Left cardiac atrium (tissue), 4 donors: ENCODE measurements at regions of chr18 and their contacts with region 1.

Region 1: GRCh38 chr18:48330403-48331022 is 78.7 kb downstream of the ZBTB7C start:
- DNase-seq: no peak
- ATAC-seq: peak in 1 of 2 donors; percentile 74

Region 2: DNA sequence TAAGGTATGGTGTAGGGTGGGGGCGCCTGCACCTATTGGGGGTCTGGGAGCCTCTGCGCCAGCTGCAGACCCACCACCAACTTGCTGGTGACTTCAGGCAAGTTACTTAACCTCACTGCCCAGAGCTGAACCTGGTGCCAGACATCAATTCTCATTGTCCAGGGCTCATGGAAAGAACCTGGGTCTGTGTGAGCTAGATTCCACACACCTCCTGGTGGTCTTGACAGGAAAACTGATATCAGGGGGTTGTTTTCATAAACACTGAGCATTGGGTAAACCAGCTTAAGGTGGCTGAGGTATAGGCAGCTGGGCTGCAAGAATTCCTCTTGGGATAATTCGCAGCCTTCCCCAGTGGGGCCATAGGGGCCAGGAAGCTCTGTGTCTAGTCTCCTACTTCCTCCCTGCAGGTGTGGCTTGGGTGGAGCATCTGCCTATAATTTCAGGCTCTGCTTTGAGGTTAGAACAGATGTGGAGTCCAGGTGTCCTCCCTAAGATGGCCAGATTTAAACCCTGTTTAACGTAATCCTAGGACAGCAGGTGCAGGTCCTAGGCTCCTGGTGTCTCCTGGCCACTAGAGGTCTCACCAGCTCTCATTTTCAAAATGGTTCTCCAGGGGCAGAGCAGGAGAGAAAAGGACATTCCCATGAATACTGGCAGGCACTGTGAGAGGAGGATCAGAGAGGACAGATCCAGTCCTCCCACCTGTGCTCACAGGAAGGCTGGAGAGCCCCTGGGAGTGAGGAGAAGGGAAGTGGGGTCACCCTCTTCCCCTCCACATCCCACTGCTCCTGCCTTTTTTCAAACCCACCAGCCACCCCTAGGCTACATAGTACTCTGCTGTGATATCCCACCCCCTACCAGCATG is 299.7 kb before region 1 on chr18:
- intact Hi-C with region 1: loop called (anchors 5 to 10 kb)
- DNase-seq: no peak
- ATAC-seq: peak; percentile 63 to 68

Region 3: DNA sequence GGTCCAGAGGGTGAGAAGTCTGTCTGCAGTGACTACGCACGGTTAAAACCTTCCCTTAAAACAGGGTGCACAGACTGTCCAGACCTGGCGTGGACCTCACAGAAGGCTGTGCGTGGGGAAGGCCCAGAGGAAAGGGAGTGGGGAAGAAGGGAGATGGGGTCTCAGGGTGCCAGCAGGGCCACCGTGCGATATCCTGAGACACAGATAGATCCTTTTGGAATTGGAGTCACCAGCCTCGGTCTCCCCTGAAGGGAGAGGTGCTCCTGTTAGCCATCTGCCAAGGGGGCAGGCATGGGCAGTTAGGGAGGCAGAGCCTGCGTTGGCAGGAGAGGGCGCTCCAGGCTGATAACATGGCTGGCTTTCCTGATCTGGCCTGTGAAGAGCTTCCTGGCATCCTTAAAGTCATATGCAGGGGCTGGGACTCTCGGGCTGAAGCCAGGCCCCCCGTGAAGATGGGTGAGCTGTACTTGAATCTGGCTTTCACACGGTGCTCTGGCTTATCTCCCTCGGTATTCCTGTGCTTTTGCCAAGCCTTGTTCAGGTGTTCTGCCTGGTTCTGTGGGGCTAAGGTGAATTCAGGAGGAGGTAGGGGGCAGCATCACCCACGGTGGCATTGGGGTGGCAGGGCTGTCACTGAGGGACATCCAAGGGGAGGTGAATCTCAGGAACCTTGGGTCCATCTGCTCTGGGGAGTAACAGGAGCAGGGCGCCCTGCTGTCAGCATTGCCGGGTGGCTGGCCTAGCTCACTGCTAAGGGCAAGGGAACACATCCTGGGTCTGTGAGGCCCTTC is 292.8 kb before region 1 on chr18:
- intact Hi-C with region 1: loop called (anchors 5 to 10 kb)
- DNase-seq: no peak
- ATAC-seq: peak in 1 of 2 donors; percentile 55

Region 4: GRCh38 chr18:48391868-48392267 is 61.4 kb after region 1 on chr18:
- intact Hi-C with region 1: no loop called
- DNase-seq: no peak
- ATAC-seq: peak; percentile 55 to 78

Region 5: GRCh38 chr18:48410095-48410920 is 79.8 kb after region 1 on chr18:
- intact Hi-C with region 1: no loop called
- DNase-seq: peak; percentile 95
- ATAC-seq: peak; percentile 97 to 99